ENCODE measurements at regions of chr14 and their contacts with region 1.

Region 1: DNA sequence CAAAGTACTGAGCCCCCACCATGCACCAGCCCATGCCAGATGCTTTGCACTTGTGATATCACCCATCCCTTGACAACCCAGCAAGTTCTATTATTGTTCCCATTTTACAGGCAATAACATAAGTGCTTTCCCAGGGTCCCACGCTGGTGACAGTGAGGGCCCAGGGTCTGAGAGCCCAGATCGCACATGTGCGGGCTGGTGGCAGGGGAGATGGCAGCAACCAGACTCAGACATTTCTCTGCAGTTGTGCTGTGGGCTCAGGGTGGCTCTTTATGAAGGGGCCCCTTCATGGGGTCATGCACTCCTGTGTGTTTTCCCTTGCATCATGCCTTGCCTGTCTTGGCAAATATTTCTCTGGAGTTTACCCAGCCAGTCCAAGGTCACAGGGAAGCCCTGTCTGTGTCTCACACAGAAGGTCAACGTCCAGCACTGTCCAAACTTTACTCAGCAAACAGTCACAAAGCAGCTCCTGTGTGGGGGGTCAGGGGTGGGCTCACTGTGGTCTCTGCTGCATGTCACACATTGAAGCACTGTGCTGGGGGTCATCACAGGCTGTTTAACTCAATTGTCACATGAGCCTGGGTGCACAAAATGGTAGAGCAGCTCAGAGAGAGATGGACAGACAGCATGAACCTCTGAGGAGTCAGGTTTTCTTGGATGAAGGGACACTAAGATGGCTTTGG is 12.7 kb downstream of the SERPINA5 start:
- DNase-seq: peak; percentile 100
- ATAC-seq: peak; percentile 81
- H3K4me3 ChIP-seq: peak overlapping the region in 2 of 3 experiments; percentile 25 to 54; a peak in 2 of 6 replicates
- H3K27ac ChIP-seq: peak overlapping the region; percentile 86
- H3K4me1 ChIP-seq: peaks cover 73% of the 10 kb centered on the region
- H3K27me3 ChIP-seq: no peaks in the 10 kb centered on the region
- CTCF ChIP-seq: peak; percentile 35
- EP300 ChIP-seq: peak; percentile 100
- POLR2A ChIP-seq: peak in 1 of 2 experiments; percentile 7; a peak in 1 of 4 replicates
- RAD21 ChIP-seq: peak; percentile 70

Region 2: DNA sequence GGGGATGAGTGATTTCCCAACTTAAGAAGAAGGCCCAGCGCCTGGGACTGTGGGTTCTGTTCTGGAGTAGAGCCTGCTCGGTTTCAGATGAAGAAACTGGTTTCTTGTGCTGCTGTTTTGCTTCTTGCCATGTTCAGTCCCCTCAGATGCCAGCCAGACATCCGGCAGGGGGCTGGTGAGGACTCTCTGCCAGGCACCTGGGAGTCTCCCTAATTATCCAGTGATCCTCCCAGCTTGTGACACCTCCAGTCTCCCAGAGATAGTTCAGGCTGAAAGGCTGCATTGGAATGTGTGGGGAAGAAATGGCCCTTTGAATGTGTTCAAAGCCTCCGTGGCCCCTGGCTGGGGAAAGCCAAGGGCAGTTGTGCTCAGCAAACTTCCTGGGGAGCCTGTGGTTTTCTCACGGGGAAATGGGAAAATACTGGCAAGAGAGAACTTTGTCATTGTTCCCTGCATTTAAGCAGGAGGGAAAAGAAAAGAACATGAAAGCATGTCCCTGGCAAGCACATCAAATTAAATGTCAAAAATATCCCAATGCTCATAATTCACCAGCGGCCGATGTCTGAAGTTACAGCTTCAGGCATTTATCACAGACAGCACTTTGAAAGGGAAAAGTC is 76.1 kb before region 1 on chr14:
- CTCF ChIA-PET with region 1: no interaction called
- POLR2A ChIA-PET with region 1: interaction called, 14 read pairs
- in situ Hi-C with region 1: no loop called
- intact Hi-C with region 1: no loop called
- DNase-seq: peak; percentile 77
- ATAC-seq: peak; percentile 9; the same call in 2 of the 3 replicates
- H3K4me3 ChIP-seq: peak overlapping the region in 1 of 3 experiments; percentile 14; a peak in 1 of 6 replicates
- H3K27ac ChIP-seq: peak overlapping the region; percentile 44
- H3K4me1 ChIP-seq: peaks cover 92% of the 10 kb centered on the region
- H3K27me3 ChIP-seq: no peaks in the 10 kb centered on the region
- CTCF ChIP-seq: no peak
- EP300 ChIP-seq: peak in 1 of 2 experiments; percentile 80; a peak in 2 of 4 replicates
- POLR2A ChIP-seq: no peak
- RAD21 ChIP-seq: no peak

Region 3: GRCh38 chr14:94571950-94572349 is 21.9 kb before region 1 on chr14:
- CTCF ChIA-PET with region 1: no interaction called
- POLR2A ChIA-PET with region 1: interaction called, 142 read pairs
- in situ Hi-C with region 1: no loop called
- intact Hi-C with region 1: no loop called
- DNase-seq: peak; percentile 37
- ATAC-seq: peak; percentile 7; the same call in 2 of the 3 replicates
- H3K4me3 ChIP-seq: no peak overlapping the region
- H3K27ac ChIP-seq: peak overlapping the region; percentile 94
- H3K4me1 ChIP-seq: peaks cover 89% of the 10 kb centered on the region
- H3K27me3 ChIP-seq: no peaks in the 10 kb centered on the region
- CTCF ChIP-seq: no peak
- EP300 ChIP-seq: no peak
- POLR2A ChIP-seq: no peak
- RAD21 ChIP-seq: no peak

Region 4: DNA sequence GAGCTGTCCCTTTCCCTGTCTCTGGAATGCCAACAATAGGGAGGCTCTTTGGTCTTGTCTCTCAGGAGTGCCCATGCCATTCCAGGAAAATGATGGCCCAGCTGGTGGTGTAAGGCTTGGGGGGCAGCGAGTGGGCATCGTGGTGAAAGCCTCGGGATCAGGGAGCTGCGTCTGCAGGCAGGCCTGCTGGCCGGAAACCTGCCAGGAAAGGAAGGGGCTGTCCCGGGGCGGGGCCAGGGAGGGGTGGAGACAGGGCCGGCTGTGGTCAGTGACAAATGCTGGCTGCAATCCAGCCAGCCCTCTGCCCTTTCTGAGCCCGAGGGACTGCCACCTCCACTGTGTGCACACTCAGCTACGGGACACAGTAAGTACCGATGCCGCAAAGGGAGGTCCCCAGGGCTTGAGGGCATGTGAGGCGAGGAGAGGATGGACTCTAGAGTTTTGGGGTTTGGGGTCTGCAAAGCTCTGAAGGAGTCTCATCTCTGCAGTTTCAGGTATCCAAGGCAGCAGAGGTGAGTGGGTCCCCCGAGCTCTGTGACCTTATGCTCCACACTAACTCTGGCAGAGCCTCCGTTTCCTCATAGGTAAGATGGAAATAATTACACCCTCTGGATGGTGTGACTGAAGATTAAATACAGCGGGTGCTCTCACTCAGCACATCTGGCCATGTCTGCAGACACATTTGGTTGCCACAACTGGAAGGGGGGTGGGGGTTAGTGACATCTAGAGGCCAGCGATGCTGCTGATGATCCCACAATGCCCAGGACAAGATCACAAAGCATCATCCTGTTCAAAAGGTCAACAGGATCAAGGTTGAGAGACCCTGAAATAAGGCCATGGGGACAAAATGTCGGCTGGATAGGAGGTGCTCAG is 12.5 kb before region 1 on chr14 and contains the start of gene SERPINA5:
- CTCF ChIA-PET with region 1: no interaction called
- POLR2A ChIA-PET with region 1: interaction called, 169 read pairs
- in situ Hi-C with region 1: no loop called
- intact Hi-C with region 1: loop called (anchors 1 kb)
- DNase-seq: peak; percentile 83
- ATAC-seq: peak; percentile 95
- H3K4me3 ChIP-seq: peak within 1 kb of the TSS; percentile 61 to 88 (median 75)
- H3K27ac ChIP-seq: peak within 1 kb of the TSS; percentile 88
- H3K4me1 ChIP-seq: peaks cover 75% of the 10 kb centered on the region
- H3K27me3 ChIP-seq: no peaks in the 10 kb centered on the region; a peak in 1 of 5 replicates
- CTCF ChIP-seq: peak; percentile 54
- EP300 ChIP-seq: peak in 1 of 2 experiments; percentile 46; a peak in 2 of 4 replicates
- POLR2A ChIP-seq: peak; percentile 83 to 92
- RAD21 ChIP-seq: peak; percentile 37; the same call in 1 of the 2 replicates
- total RNA-seq, gene SERPINA5: 237 and 498 TPM in 2 replicates

Region 5: GRCh38 chr14:94952097-94952496 is 358.2 kb after region 1 on chr14:
- CTCF ChIA-PET with region 1: no interaction called
- POLR2A ChIA-PET with region 1: no interaction called
- in situ Hi-C with region 1: no loop called
- intact Hi-C with region 1: no loop called
- DNase-seq: no peak
- ATAC-seq: no peak
- H3K4me3 ChIP-seq: no peak overlapping the region
- H3K27ac ChIP-seq: no peak overlapping the region
- H3K4me1 ChIP-seq: no peaks in the 10 kb centered on the region
- H3K27me3 ChIP-seq: peaks cover 2 to 18% of the 10 kb centered on the region in 2 experiments; a peak in 3 of 5 replicates
- CTCF ChIP-seq: no peak
- EP300 ChIP-seq: no peak
- POLR2A ChIP-seq: no peak
- RAD21 ChIP-seq: no peak

Measured in HepG2 (cell line).